ENCODE measurements at regions of chr2 and their contacts with region 1.

Region 1: DNA sequence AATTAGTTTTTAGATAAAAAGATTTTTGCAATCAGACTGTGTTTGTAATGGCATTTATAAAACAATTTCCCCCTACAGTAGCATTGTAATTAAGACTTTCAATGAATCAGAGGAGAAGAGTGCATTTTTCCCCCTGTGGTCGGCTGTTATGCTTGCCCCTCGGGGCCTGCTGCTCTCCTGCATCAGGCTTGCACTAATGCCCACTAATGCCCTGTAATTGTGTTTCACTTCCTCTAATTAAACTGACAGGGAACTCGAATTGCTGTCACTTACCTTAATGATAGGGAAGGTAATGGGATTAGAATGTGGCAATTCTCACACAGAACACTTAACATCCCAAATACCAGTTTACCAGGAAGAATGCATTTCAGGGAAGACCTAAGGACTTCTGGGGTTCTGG is 61.2 kb upstream of the LRRTM1 start:
- DNase-seq: no peak

Region 2: DNA sequence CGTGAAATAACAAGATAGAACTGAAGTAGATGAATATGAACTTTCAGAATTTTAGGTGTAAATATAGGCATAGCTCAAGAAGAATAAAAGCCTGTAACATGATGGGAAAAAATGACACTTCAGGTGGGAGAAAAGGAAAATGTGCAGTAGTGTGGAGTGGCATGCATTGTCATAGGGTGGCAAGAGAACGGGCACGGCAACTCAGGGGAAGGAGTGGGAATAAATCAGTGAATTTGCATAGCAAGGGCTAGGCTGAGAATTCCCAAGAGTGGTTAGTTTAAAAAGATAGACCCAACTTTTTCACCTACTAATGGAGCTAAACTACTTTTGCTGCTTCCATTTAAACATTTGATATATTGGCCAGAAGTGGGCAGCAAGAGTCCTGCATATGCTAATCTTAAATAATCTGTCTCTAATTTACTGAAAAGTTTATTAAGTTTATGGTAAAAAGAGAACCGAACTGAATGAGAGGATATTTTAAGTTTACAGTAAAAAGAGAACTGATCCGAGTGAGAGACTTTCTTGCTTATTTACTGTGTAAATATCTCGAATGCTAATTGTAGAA is 624.8 kb before region 1 on chr2:
- intact Hi-C with region 1: no loop called
- DNase-seq: no peak

Region 3: GRCh38 chr2:80326214-80326613 is 39.5 kb before region 1 on chr2:
- intact Hi-C with region 1: loop called (anchors 5 kb)
- DNase-seq: no peak

Region 4: DNA sequence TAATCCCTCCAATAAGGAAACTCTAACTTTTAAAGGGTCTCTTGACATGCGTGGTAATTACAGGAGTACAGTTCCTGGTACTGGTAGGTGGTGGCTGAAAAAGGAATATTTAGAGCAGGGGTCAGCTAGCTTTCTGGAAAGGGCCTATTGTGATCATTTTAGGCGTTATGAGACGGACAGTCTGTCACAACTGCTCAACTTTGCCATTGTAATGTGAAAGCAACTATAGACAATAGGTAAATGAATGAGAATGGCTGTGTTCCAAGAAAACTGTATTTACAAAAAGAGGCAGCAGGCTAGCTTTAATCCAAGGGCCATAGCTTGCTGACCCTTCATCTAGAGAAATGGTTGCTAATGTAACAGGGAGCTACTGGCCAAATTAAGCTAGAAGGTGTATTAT is 116.5 kb after region 1 on chr2:
- intact Hi-C with region 1: loop called (anchors 2 kb)
- DNase-seq: no peak

Region 5: DNA sequence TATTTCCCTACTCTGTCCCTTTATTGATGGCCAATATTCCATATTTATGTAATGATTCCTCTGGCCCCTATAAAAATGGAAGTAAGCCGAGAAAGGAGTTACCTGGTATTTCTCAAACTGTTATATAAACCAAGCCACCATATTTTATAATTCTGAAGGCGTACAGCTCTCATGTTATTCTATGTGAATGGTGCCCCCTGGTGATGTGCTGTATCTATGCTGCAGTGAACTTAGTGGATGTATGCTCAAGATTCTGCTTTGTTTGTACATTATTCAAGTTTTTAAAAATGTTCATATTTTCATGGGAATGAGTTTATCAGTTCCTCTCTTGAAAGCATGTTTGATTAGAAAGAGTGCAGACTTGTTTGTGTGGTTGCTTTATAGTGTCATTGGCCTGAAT is 133.3 kb after region 1 on chr2:
- intact Hi-C with region 1: no loop called
- DNase-seq: no peak

Region 6: DNA sequence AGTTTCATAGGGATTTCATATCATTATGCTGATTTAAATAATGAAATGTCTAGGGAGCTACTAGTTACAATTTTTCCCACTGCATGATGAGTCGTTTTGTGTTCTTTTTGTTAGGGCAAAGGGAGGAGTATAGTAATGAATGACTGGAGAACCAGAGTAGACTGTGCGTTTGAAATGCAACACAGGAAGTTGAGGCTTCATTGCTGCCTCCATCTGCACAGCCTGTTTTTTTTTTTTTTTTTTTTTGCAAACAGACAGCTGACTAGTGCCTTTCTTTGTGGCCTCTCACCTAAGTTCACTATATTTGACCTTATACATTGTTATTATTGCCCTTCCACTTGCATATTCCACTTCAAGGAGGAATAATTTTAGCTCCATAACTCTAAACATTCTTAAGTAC is 225.5 kb after region 1 on chr2:
- intact Hi-C with region 1: no loop called
- DNase-seq: no peak